A673 (cell line): ENCODE measurements at regions of chr1 and their contacts with region 1.

Region 1: GRCh38 chr1:182962554-182963115 is 9.7 kb upstream of the SHCBP1L start:
- DNase-seq: peak; percentile 92
- H3K4me3 ChIP-seq: peak overlapping the region; percentile 28
- H3K27ac ChIP-seq: no peak overlapping the region
- H3K4me1 ChIP-seq: peaks cover 6% of the 10 kb centered on the region
- H3K27me3 ChIP-seq: no peaks in the 10 kb centered on the region
- CTCF ChIP-seq: peak; percentile 96

Region 2: GRCh38 chr1:182806015-182806678 is 156.5 kb before region 1 on chr1:
- CTCF ChIA-PET with region 1: no interaction called
- POLR2A ChIA-PET with region 1: no interaction called
- intact Hi-C with region 1: no loop called
- DNase-seq: no peak
- H3K4me3 ChIP-seq: no peak overlapping the region
- H3K27ac ChIP-seq: no peak overlapping the region
- H3K4me1 ChIP-seq: no peaks in the 10 kb centered on the region
- H3K27me3 ChIP-seq: no peaks in the 10 kb centered on the region
- CTCF ChIP-seq: 0 out of 2 replicates have a peak, but pooled peaks have one; percentile 9

Region 3: DNA sequence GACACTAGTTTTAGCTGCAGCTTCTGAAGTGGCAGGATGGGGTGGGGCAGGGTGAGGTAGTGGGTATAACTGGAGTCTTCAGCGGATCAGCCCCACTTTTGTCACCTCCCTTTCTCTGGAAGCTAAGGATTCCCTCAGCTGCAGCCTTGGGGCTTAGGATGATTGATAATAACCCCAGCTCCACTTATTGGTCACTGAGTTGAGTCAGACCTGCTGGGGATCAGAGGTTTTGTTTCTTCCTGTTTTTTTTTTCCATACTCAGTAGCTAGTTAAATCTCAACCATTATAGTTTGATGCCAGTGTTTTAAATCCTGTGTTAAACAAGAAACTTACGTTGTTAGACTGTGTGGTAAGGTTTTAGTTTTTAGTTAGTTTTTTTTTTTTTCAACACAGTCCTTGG is 117.8 kb after region 1 on chr1:
- CTCF ChIA-PET with region 1: no interaction called
- POLR2A ChIA-PET with region 1: no interaction called
- intact Hi-C with region 1: no loop called
- DNase-seq: no peak
- H3K4me3 ChIP-seq: no peak overlapping the region
- H3K27ac ChIP-seq: no peak overlapping the region
- H3K4me1 ChIP-seq: peaks cover 13% of the 10 kb centered on the region
- H3K27me3 ChIP-seq: no peaks in the 10 kb centered on the region
- CTCF ChIP-seq: no peak

Region 4: GRCh38 chr1:183227963-183228649 is 265.5 kb after region 1 on chr1:
- CTCF ChIA-PET with region 1: interaction called, 19 read pairs
- POLR2A ChIA-PET with region 1: no interaction called
- intact Hi-C with region 1: no loop called
- DNase-seq: peak; percentile 82
- H3K4me3 ChIP-seq: no peak overlapping the region
- H3K27ac ChIP-seq: no peak overlapping the region
- H3K4me1 ChIP-seq: no peaks in the 10 kb centered on the region
- H3K27me3 ChIP-seq: no peaks in the 10 kb centered on the region
- CTCF ChIP-seq: peak; percentile 87

Region 5: DNA sequence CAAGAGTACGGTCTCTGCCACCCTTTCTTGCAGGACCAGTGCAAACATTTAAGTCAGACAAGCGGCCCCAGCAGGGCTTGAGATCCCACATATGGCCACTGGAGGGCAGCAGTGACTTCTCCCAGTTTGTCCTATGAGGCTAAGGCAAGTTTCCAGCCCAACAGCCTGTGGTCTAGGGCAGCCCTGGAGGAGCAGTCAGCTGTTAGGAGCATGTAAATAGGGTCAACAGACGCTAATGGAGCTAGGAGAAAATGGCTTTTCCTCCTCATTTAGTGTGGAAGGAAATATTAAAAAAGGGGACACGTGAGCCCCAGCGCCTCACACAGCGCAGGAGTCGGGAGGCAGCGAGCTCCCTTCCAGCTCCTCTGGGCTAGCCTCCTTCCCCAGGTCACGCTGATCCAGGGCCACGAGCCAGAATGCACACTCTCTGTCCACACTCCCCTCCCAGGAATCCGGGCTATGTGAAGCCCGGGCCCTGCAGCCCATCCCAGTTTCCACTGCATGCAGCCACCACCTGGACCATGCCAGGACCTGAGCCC is 319.0 kb after region 1 on chr1:
- CTCF ChIA-PET with region 1: interaction called, 7 read pairs
- POLR2A ChIA-PET with region 1: no interaction called
- intact Hi-C with region 1: loop called (anchors 1 kb)
- DNase-seq: peak; percentile 91
- H3K4me3 ChIP-seq: no peak overlapping the region
- H3K27ac ChIP-seq: no peak overlapping the region
- H3K4me1 ChIP-seq: peaks cover 22% of the 10 kb centered on the region
- H3K27me3 ChIP-seq: no peaks in the 10 kb centered on the region
- CTCF ChIP-seq: peak; percentile 92

Region 6: GRCh38 chr1:183543619-183544204 is 581.1 kb after region 1 on chr1:
- CTCF ChIA-PET with region 1: no interaction called
- POLR2A ChIA-PET with region 1: no interaction called
- intact Hi-C with region 1: loop called (anchors 2 kb)
- DNase-seq: peak; percentile 75
- H3K4me3 ChIP-seq: no peak overlapping the region
- H3K27ac ChIP-seq: no peak overlapping the region
- H3K4me1 ChIP-seq: peaks cover 7% of the 10 kb centered on the region
- H3K27me3 ChIP-seq: no peaks in the 10 kb centered on the region
- CTCF ChIP-seq: peak; percentile 79